CD4-positive, alpha-beta memory T cell (primary cell): ENCODE measurements at regions of chrX and their contacts with region 1.

Region 1: DNA sequence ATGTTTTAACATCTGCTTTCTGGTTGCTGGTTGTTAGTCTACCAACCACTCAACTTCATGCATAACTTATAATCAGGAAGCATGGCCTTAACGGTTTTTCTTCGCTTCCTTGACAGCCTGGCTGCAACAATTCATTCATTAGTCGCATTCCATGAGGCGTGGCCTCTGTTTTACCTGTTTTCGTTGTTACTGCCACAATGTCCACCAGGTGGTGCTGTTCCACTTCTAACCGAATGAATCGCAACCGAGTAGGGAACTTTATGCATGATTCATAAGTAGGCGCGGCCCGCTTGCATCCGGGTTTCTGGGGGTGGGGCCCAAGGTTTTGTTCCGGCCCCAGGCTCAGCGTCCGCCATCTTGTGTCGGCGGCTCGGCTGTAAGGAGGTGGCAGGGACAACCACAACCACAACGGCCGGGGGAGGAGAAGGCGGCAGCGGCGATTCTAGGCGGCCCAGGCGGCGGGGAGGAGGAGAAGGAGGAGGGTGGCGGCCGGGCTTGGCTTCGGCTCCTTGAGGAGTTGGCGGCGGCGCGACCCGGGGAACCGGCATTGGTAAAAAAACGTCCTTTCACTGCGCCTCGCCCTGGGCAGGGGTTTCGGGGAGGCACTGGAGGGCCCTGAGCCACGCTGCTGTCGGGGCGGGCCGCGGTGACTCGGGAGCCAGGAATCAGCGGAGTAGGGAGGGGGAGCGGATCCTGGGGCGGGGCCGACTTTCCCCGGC is at the start of gene UBA1:
- DNase-seq: peak; percentile 95 to 97 (median 96)
- H3K4me3 ChIP-seq: peak within 1 kb of the TSS; percentile 69 to 82
- H3K4me3 Mint-ChIP-seq: peak within 1 kb of the TSS; percentile 97 to 99 (median 99)
- H3K27ac ChIP-seq: peak within 1 kb of the TSS; percentile 96
- H3K27ac Mint-ChIP-seq: peak within 1 kb of the TSS; percentile 94 to 100 (median 99)
- H3K4me1 ChIP-seq: peaks cover 64% of the 10 kb centered on the region
- H3K4me1 Mint-ChIP-seq: peaks cover 33 to 75% (median 62%) of the 10 kb centered on the region in 4 donors
- H3K27me3 ChIP-seq: no peaks in the 10 kb centered on the region
- H3K27me3 Mint-ChIP-seq: no peaks in the 10 kb centered on the region
- total RNA-seq, gene UBA1: 129 to 136 TPM

Region 2: GRCh38 chrX:46676399-46677356 is 517.0 kb before region 1 on chrX:
- CTCF ChIA-PET with region 1: no interaction called
- POLR2A ChIA-PET with region 1: no interaction called
- intact Hi-C with region 1: no loop called
- DNase-seq: no peak
- H3K4me3 ChIP-seq: no peak overlapping the region
- H3K4me3 Mint-ChIP-seq: no peak overlapping the region
- H3K27ac ChIP-seq: no peak overlapping the region
- H3K27ac Mint-ChIP-seq: peak overlapping the region in 1 of 7 donors; percentile 25
- H3K4me1 ChIP-seq: no peaks in the 10 kb centered on the region
- H3K4me1 Mint-ChIP-seq: no peaks in the 10 kb centered on the region
- H3K27me3 ChIP-seq: no peaks in the 10 kb centered on the region
- H3K27me3 Mint-ChIP-seq: no peaks in the 10 kb centered on the region

Region 3: GRCh38 chrX:47068214-47068613 is 125.4 kb before region 1 on chrX:
- CTCF ChIA-PET with region 1: no interaction called
- POLR2A ChIA-PET with region 1: no interaction called
- intact Hi-C with region 1: no loop called
- DNase-seq: no peak
- H3K4me3 ChIP-seq: no peak overlapping the region
- H3K4me3 Mint-ChIP-seq: no peak overlapping the region
- H3K27ac ChIP-seq: no peak overlapping the region
- H3K27ac Mint-ChIP-seq: no peak overlapping the region
- H3K4me1 ChIP-seq: no peaks in the 10 kb centered on the region
- H3K4me1 Mint-ChIP-seq: no peaks in the 10 kb centered on the region
- H3K27me3 ChIP-seq: no peaks in the 10 kb centered on the region
- H3K27me3 Mint-ChIP-seq: no peaks in the 10 kb centered on the region

Region 4: DNA sequence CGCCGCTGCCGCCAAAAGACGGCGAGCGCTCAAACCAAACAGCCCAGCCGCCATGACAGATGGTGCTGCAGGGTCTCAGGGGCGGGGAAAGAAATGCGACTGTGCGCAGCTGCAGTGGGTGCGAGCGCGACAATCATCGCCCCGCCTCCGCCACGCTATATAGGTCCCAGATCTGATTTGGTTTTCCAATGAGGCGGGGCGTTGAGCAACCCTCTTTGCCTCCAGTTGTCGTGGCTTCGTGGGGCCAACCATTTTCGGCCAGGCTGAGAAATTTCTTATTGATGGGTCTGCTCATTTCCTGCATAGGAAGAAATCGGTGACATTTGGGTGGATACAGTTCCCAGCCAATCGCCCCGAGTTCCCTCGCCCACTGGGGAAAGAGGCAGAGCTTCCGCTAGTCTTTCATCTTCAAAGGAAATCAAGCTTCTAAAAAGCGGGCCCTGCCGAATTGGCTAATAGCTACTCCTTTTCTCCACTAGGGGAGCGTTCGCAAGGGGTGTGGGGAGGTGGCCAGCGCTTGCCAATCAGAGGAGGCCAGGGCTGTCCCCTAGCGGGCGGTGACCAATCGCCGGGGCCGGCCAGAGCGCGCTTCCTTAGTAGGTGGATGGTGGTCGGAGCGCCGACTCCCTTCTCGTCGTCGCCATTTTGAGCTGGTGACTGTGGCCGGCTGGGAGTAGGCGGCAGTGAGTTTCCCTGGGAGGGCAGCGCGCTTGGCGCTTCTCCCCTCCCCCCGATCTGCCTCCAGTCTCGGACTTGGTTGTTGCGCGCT is 48.8 kb before region 1 on chrX and contains the starts of genes NDUFB11 and RBM10:
- CTCF ChIA-PET with region 1: interaction called, 18 read pairs
- POLR2A ChIA-PET with region 1: interaction called, 28 read pairs
- intact Hi-C with region 1: loop called (anchors 1 kb)
- DNase-seq: peak; percentile 87 to 95 (median 91)
- H3K4me3 ChIP-seq: peak within 1 kb of the TSS; percentile 69 to 73
- H3K4me3 Mint-ChIP-seq: peak within 1 kb of the TSS; percentile 94 to 99 (median 96)
- H3K27ac ChIP-seq: peak within 1 kb of the TSS; percentile 91
- H3K27ac Mint-ChIP-seq: peak within 1 kb of the TSS; percentile 95 to 99 (median 98)
- H3K4me1 ChIP-seq: peaks cover 36% of the 10 kb centered on the region
- H3K4me1 Mint-ChIP-seq: peaks cover 19 to 52% (median 33%) of the 10 kb centered on the region in 4 donors
- H3K27me3 ChIP-seq: no peaks in the 10 kb centered on the region
- H3K27me3 Mint-ChIP-seq: no peaks in the 10 kb centered on the region
- total RNA-seq, gene NDUFB11: 53.2 to 60.6 TPM
- total RNA-seq, gene RBM10: 51.2 to 53.3 TPM

Region 5: DNA sequence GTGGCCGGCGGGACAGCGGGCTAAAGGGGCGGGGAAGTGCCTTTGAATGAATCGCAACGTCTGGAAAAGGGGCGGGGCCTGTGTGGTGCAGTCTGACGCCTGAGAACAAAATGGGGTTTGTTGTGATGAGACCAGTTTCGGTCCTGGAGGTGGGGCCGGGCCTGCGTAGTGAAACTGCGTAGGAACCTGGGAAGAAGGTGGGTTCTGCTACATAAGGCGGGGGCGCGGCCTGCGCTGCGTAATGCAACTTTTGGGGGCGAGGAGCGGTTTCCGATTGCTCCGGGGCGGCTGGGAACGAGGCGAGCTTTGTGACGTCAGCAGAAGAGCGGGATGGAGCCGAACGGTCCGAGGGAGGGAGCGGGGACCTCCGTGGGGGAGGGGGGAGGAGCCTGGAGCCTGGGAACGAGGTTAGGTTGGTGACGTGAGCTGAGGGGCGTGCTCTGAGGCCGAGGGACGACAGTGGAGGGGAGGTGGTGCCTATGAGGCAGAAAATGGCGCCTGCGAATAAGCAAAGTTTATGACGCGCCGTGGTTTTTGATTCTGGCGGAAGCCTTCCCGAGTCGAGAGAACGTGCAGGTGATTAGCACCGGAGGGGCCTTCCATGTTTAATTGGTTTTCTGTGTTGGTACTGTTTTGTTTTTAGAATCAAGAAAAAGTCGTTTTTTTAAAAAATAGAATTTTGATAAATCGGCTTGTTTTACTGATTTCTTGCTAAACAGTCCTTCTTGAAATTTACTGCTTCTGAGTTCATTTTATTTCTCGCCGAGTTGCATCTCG is 39.9 kb after region 1 on chrX:
- CTCF ChIA-PET with region 1: no interaction called
- POLR2A ChIA-PET with region 1: interaction called, 15 read pairs
- intact Hi-C with region 1: loop called (anchors 1 kb)
- DNase-seq: peak; percentile 95 to 98 (median 96)
- H3K4me3 ChIP-seq: peak overlapping the region in 1 of 2 donors; percentile 60
- H3K4me3 Mint-ChIP-seq: peak overlapping the region; percentile 86 to 96 (median 91)
- H3K27ac ChIP-seq: peak overlapping the region; percentile 97
- H3K27ac Mint-ChIP-seq: peak overlapping the region; percentile 93 to 100 (median 98)
- H3K4me1 ChIP-seq: peaks cover 31% of the 10 kb centered on the region
- H3K4me1 Mint-ChIP-seq: peaks cover 11 to 34% (median 25%) of the 10 kb centered on the region in 4 donors
- H3K27me3 ChIP-seq: no peaks in the 10 kb centered on the region
- H3K27me3 Mint-ChIP-seq: no peaks in the 10 kb centered on the region

Region 6: GRCh38 chrX:47366028-47366722 is 172.5 kb after region 1 on chrX:
- CTCF ChIA-PET with region 1: no interaction called
- POLR2A ChIA-PET with region 1: interaction called, 3 read pairs
- intact Hi-C with region 1: loop called (anchors 1 kb)
- DNase-seq: peak; percentile 71 to 86 (median 78)
- H3K4me3 ChIP-seq: peak overlapping the region; percentile 11 to 68
- H3K4me3 Mint-ChIP-seq: peak overlapping the region; percentile 84 to 97 (median 92)
- H3K27ac ChIP-seq: peak overlapping the region; percentile 57
- H3K27ac Mint-ChIP-seq: peak overlapping the region; percentile 90 to 98 (median 96)
- H3K4me1 ChIP-seq: peaks cover 10% of the 10 kb centered on the region
- H3K4me1 Mint-ChIP-seq: peaks cover 11 to 25% (median 16%) of the 10 kb centered on the region in 4 donors
- H3K27me3 ChIP-seq: no peaks in the 10 kb centered on the region
- H3K27me3 Mint-ChIP-seq: no peaks in the 10 kb centered on the region

Region 7: GRCh38 chrX:47482512-47483309 is 289.1 kb after region 1 on chrX and contains the start of gene ZNF41:
- CTCF ChIA-PET with region 1: no interaction called
- POLR2A ChIA-PET with region 1: no interaction called
- intact Hi-C with region 1: loop called (anchors 5 kb)
- DNase-seq: peak; percentile 78 to 86 (median 83)
- H3K4me3 ChIP-seq: peak within 1 kb of the TSS; percentile 70 to 88
- H3K4me3 Mint-ChIP-seq: peak within 1 kb of the TSS; percentile 82 to 95 (median 90)
- H3K27ac ChIP-seq: peak within 1 kb of the TSS; percentile 77
- H3K27ac Mint-ChIP-seq: peak within 1 kb of the TSS; percentile 85 to 99 (median 97)
- H3K4me1 ChIP-seq: peaks cover 29% of the 10 kb centered on the region
- H3K4me1 Mint-ChIP-seq: peaks cover 12 to 41% (median 24%) of the 10 kb centered on the region in 4 donors
- H3K27me3 ChIP-seq: no peaks in the 10 kb centered on the region
- H3K27me3 Mint-ChIP-seq: no peaks in the 10 kb centered on the region
- total RNA-seq, gene ZNF41: 16.1 TPM

Region 8: GRCh38 chrX:47637546-47638195 is 444.0 kb after region 1 on chrX:
- CTCF ChIA-PET with region 1: no interaction called
- POLR2A ChIA-PET with region 1: no interaction called
- intact Hi-C with region 1: loop called (anchors 5 kb)
- DNase-seq: peak in 4 of 5 donors; percentile 30 to 51 (median 38)
- H3K4me3 ChIP-seq: no peak overlapping the region
- H3K4me3 Mint-ChIP-seq: peak overlapping the region; percentile 46 to 76 (median 64)
- H3K27ac ChIP-seq: no peak overlapping the region
- H3K27ac Mint-ChIP-seq: peak overlapping the region; percentile 50 to 93 (median 87)
- H3K4me1 ChIP-seq: no peaks in the 10 kb centered on the region
- H3K4me1 Mint-ChIP-seq: peaks cover 0 to 18% (median 6%) of the 10 kb centered on the region in 4 donors
- H3K27me3 ChIP-seq: no peaks in the 10 kb centered on the region
- H3K27me3 Mint-ChIP-seq: no peaks in the 10 kb centered on the region